CD14-positive monocyte (primary cell): ENCODE measurements at regions of chr6 and their contacts with region 1.

Region 1: DNA sequence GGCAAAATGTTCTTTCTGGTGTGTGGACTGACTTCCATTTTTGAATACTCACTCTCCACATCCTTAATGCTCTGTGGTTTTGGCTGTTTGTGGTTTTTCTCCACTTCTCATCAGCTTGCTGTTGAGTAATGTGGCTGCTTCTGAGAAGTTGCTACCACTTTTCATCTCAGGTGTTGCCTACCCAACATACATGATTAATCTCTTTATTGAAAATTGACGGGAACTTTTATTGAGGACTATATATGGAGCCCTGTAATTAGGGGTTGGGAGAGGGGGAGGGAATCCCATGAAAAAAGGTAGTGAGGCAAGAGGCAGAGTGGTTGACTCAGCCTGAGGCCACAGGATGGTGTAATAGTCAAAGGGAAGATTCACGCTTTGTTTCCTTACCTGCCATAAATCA is 17.6 kb downstream of the IL22RA2 start:
- DNase-seq: peak; percentile 70 to 83 (median 81)
- H3K4me3 ChIP-seq: peak overlapping the region in 1 of 3 experiments; percentile 44
- H3K4me3 Mint-ChIP-seq: peak overlapping the region in 1 of 2 donors; percentile 73
- H3K27ac ChIP-seq: peak overlapping the region in 1 of 2 donors; percentile 72
- H3K27ac Mint-ChIP-seq: peak overlapping the region; percentile 86 to 94 (median 91)
- H3K4me1 ChIP-seq: peaks cover 28 to 49% of the 10 kb centered on the region in 2 donors
- H3K4me1 Mint-ChIP-seq: peaks cover 46% of the 10 kb centered on the region
- H3K27me3 ChIP-seq: no peaks in the 10 kb centered on the region
- H3K27me3 Mint-ChIP-seq: peaks cover 2 to 4% (median 4%) of the 10 kb centered on the region in 3 donors
- CTCF ChIP-seq: no peak

Region 2: DNA sequence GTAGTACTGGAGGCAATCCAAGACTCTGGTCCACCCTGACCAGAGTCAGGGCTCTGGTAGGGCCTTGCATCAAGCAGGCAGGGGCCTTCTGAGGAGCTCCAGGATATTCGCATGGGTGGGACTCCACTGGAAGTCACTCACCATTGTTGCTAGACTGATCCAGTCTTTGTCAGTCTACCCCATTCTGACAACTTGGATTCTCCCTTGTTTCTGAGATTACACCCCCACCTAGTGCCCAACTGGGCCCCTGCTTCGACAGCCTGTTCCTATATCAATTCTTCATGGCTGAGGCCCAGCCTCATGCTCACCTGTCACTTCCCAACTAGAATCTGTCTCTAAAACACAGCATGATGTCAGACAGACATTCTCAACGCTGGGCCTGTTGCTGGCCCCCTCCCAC is 228.5 kb before region 1 on chr6:
- intact Hi-C with region 1: no loop called
- DNase-seq: no peak
- H3K4me3 ChIP-seq: no peak overlapping the region
- H3K4me3 Mint-ChIP-seq: no peak overlapping the region
- H3K27ac ChIP-seq: no peak overlapping the region
- H3K27ac Mint-ChIP-seq: no peak overlapping the region
- H3K4me1 ChIP-seq: peaks cover 12 to 16% of the 10 kb centered on the region in 2 donors
- H3K4me1 Mint-ChIP-seq: peaks cover 16% of the 10 kb centered on the region
- H3K27me3 ChIP-seq: peaks cover 22 to 51% of the 10 kb centered on the region in 2 donors
- H3K27me3 Mint-ChIP-seq: peaks cover 39 to 71% (median 41%) of the 10 kb centered on the region in 3 donors
- CTCF ChIP-seq: no peak

Region 3: DNA sequence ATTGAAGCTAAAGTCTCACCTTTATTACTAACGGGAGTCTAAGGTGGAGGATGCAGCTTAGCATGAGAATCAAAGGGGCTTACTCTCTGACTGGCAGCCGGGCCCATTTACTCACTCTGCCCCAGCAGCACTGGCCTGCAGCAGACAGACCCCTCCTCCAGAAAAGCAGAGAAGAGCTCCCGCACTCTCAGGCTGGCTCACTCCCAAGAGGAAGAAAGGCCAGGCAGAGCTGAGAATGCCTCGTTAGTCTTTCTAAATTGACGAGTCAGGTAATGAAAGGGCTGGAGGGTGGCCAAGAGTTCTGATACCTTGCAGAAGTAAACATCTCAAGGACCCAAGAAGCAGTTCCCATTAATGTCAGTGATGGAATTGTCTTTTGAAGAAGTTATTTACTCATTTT is 66.5 kb before region 1 on chr6:
- intact Hi-C with region 1: no loop called
- DNase-seq: no peak
- H3K4me3 ChIP-seq: no peak overlapping the region
- H3K4me3 Mint-ChIP-seq: no peak overlapping the region
- H3K27ac ChIP-seq: no peak overlapping the region
- H3K27ac Mint-ChIP-seq: no peak overlapping the region
- H3K4me1 ChIP-seq: peaks cover 10 to 14% of the 10 kb centered on the region in 2 donors
- H3K4me1 Mint-ChIP-seq: peaks cover 19% of the 10 kb centered on the region
- H3K27me3 ChIP-seq: no peaks in the 10 kb centered on the region
- H3K27me3 Mint-ChIP-seq: peaks cover 0 to 5% (median 5%) of the 10 kb centered on the region in 3 donors
- CTCF ChIP-seq: no peak

Region 4: GRCh38 chr6:137202078-137202477 is 46.2 kb after region 1 on chr6:
- intact Hi-C with region 1: loop called in 1 of 2 experiments (anchors 10 kb)
- DNase-seq: no peak
- H3K4me3 ChIP-seq: no peak overlapping the region
- H3K4me3 Mint-ChIP-seq: no peak overlapping the region
- H3K27ac ChIP-seq: no peak overlapping the region
- H3K27ac Mint-ChIP-seq: peak overlapping the region in 1 of 7 donors; percentile 24
- H3K4me1 ChIP-seq: peaks cover 7 to 11% of the 10 kb centered on the region in 2 donors
- H3K4me1 Mint-ChIP-seq: peaks cover 10% of the 10 kb centered on the region
- H3K27me3 ChIP-seq: no peaks in the 10 kb centered on the region
- H3K27me3 Mint-ChIP-seq: peaks cover 0 to 3% (median 0%) of the 10 kb centered on the region in 3 donors
- CTCF ChIP-seq: no peak

Region 5: DNA sequence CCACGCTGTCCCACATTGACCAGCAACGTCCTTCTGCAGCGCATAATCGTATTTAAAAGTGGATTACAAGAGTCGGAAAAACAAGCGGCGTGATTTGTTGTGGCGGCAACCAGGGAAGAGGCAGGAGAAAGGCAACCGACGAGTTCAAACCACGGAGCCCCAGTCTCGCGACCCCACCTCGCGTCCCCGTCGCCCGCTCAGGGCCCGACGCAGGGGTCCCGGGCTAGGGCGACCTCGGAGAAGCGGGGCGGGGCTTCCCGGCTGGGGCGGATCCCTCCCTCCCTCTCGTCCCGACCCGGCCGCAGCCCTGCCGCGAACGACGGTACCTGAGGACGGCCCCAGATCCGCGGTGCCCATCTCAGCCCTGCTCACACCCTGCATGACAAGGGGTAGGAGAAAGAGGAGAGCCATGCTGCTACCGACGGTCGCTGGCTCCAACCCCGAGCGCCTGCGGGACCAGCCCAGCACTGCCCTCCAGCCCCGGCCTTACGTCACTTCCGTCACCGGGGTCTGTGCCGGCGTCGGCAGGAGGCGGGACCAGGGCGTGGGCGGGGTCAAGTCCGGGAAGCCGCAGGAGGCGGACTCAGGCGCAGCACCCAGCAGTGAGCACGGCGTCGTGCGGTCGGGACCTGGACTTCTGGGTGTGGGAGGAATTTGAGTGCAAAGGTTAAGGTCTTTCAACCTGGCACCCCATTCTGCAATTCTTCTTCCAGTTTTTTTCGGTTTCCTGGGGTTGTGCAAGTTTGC is 63.3 kb after region 1 on chr6 and contains the start of gene IFNGR1:
- intact Hi-C with region 1: loop called in 1 of 2 experiments (anchors 5 kb)
- DNase-seq: peak; percentile 93 to 97 (median 97)
- H3K4me3 ChIP-seq: peak within 1 kb of the TSS; percentile 68 to 94 (median 90)
- H3K4me3 Mint-ChIP-seq: peak within 1 kb of the TSS; percentile 94 to 99
- H3K27ac ChIP-seq: peak within 1 kb of the TSS; percentile 99
- H3K27ac Mint-ChIP-seq: peak within 1 kb of the TSS; percentile 99 to 100 (median 100)
- H3K4me1 ChIP-seq: peaks cover 79 to 84% of the 10 kb centered on the region in 2 donors
- H3K4me1 Mint-ChIP-seq: peaks cover 76% of the 10 kb centered on the region
- H3K27me3 ChIP-seq: no peaks in the 10 kb centered on the region
- H3K27me3 Mint-ChIP-seq: peaks cover 0 to 4% (median 0%) of the 10 kb centered on the region in 3 donors
- CTCF ChIP-seq: no peak
- polyA plus RNA-seq, gene IFNGR1: 204 to 372 (median 364) TPM

Region 6: DNA sequence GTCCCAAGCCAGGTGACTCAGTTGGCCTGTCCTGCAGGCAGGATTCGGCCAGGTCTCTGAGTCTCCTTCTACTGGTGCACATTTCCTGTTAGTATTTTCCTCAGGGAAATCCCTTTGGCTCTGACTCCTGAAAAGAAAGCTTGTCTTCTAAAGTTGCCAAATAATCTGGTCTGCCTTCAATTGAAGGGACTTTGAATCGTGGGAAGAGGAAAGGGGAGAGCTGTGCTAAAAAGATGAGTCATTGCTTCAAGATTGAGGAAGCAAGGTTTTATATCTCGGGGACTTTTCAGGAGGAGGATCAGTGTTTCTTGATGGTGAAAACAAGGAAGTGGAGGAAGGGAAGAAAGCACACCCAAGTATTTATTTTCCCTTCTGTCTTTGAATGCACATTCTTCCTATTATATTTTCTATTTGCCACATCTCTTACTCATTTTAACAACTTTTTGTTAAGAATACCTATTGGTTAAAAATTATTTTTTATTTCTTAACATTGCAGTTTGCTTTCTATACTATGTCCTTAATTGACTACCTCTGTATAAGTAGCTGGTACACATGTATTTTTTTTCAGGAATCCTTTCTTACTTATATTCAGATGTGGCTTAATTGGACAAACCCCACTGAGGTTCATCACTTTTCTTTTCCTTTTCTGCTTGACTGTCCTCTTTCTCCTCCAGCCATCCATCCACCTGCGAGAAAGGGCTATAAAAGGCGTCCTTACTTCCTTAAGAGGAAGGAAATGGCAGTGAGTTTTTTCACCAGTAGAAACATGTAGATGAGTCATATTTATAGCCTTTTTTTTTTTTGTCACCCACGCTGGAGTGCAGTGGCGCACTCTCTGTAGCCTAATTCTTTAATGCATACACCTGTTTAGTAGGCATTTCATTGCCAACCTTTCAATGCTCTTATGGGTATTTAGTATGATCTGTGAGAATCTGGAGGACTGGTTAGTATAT is 78.4 kb after region 1 on chr6:
- intact Hi-C with region 1: loop called in 1 of 2 experiments (anchors 5 kb)
- DNase-seq: peak; percentile 87 to 99 (median 92)
- H3K4me3 ChIP-seq: peak overlapping the region in 2 of 3 experiments; percentile 13 to 57
- H3K4me3 Mint-ChIP-seq: peak overlapping the region; percentile 1 to 69
- H3K27ac ChIP-seq: peak overlapping the region; percentile 97 to 98
- H3K27ac Mint-ChIP-seq: peak overlapping the region; percentile 93 to 98 (median 97)
- H3K4me1 ChIP-seq: peaks cover 93 to 100% of the 10 kb centered on the region in 2 donors
- H3K4me1 Mint-ChIP-seq: peaks cover 86% of the 10 kb centered on the region
- H3K27me3 ChIP-seq: no peaks in the 10 kb centered on the region
- H3K27me3 Mint-ChIP-seq: no peaks in the 10 kb centered on the region
- CTCF ChIP-seq: no peak